A673 (cell line): ENCODE measurements at regions of chr10 and their contacts with region 1.

Region 1: DNA sequence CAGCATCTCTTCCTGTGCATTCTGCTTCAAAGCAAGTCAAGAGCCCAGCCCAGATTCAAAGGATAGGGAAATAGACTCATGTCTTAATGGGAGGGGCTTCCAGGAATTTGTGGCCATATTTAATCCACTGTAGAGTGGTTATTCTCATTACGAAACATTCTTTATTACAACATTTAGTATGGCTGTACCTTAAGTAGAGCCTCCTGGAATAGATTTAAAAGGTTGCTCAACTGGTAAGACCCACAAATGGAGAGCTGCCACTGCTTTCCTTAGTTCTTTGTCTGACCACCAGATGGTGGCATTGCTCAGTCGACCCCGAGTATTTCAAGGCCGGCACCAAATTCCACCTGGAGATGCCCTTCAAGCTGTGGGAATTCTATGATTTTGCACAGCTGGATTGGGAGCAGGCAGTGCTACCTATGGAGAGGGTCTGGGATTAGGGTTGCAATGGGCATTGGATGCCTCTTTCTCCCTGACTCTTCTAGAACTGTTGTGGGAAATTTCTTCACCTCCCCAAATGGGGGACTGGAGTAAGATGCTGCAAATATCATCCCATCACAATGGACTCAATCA is 102.2 kb downstream of the RBM20 start:
- DNase-seq: peak; percentile 71
- H3K4me3 ChIP-seq: no peak overlapping the region
- H3K27ac ChIP-seq: no peak overlapping the region
- H3K4me1 ChIP-seq: no peaks in the 10 kb centered on the region
- H3K27me3 ChIP-seq: no peaks in the 10 kb centered on the region
- CTCF ChIP-seq: peak; percentile 86

Region 2: GRCh38 chr10:110336111-110336721 is 410.1 kb before region 1 on chr10:
- CTCF ChIA-PET with region 1: no interaction called
- POLR2A ChIA-PET with region 1: no interaction called
- intact Hi-C with region 1: no loop called
- DNase-seq: peak; percentile 92
- H3K4me3 ChIP-seq: no peak overlapping the region
- H3K27ac ChIP-seq: peak overlapping the region; percentile 45
- H3K4me1 ChIP-seq: peaks cover 21% of the 10 kb centered on the region
- H3K27me3 ChIP-seq: no peaks in the 10 kb centered on the region
- CTCF ChIP-seq: no peak

Region 3: GRCh38 chr10:110610308-110610774 is 136.0 kb before region 1 on chr10:
- CTCF ChIA-PET with region 1: no interaction called
- POLR2A ChIA-PET with region 1: no interaction called
- intact Hi-C with region 1: loop called (anchors 5 kb)
- DNase-seq: peak; percentile 78
- H3K4me3 ChIP-seq: no peak overlapping the region
- H3K27ac ChIP-seq: no peak overlapping the region
- H3K4me1 ChIP-seq: peaks cover 15% of the 10 kb centered on the region
- H3K27me3 ChIP-seq: no peaks in the 10 kb centered on the region
- CTCF ChIP-seq: peak; percentile 88

Region 4: DNA sequence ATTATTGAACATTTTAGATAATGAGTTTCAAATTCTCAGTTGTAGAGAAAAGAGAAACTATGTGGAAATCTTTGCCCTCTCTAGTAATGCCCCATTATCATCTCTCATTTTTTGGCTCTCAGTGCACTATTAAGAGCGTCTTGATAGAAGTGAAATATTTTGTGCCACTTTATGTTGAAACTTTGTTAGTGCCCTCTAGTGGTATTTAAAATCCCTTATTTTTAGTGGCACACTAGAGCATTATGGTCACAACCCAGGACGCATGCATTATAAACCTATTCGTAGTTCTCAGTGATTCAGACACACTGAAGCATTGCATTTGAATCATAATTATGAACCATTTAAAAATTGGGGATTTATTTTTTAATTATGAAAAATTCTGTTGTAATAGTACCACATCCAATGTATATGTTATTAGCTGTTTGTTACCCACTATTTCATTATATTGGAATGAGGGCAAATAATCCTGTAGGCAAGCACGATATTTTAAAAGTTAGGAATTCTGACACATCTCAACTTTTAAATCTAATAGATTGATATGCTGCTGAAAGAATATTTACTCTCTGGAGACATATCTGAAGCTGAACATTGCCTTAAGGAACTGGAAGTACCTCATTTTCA is 147.3 kb after region 1 on chr10:
- CTCF ChIA-PET with region 1: interaction called, 4 read pairs
- POLR2A ChIA-PET with region 1: no interaction called
- intact Hi-C with region 1: loop called (anchors 1 kb)
- DNase-seq: peak; percentile 76
- H3K4me3 ChIP-seq: no peak overlapping the region
- H3K27ac ChIP-seq: no peak overlapping the region
- H3K4me1 ChIP-seq: peaks cover 4% of the 10 kb centered on the region
- H3K27me3 ChIP-seq: no peaks in the 10 kb centered on the region
- CTCF ChIP-seq: peak; percentile 67

Region 5: DNA sequence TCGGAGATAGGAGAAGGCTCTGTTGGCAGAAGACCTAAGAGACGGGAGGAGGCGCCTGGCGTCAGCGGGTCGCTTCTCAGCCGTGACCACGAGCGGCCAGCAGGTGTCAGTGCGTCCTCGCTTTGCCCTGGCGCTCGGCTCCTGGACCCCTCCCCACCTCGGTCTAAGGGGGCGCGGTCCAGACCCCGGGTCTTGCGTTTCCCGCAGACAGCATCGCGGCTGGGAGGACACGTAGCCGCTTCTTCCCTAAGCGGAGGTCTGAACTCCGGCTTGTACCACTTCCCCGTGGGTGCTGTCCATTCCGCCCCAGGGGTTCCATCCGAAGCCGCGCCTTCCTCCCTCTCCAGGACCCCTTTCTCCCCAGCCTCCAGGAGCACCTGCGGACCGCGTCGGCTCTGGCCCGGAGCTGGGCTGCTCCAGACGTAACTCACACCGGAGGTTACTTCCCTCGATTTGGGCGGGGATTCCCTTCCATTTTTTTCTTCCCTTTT is 329.9 kb after region 1 on chr10:
- CTCF ChIA-PET with region 1: no interaction called
- POLR2A ChIA-PET with region 1: no interaction called
- intact Hi-C with region 1: loop called (anchors 5 kb)
- DNase-seq: peak; percentile 67
- H3K4me3 ChIP-seq: peak overlapping the region; percentile 51
- H3K27ac ChIP-seq: no peak overlapping the region
- H3K4me1 ChIP-seq: peaks cover 18% of the 10 kb centered on the region
- H3K27me3 ChIP-seq: peaks cover 61% of the 10 kb centered on the region
- CTCF ChIP-seq: peak; percentile 85

Region 6: GRCh38 chr10:111158595-111158994 is 412.3 kb after region 1 on chr10:
- CTCF ChIA-PET with region 1: no interaction called
- POLR2A ChIA-PET with region 1: no interaction called
- intact Hi-C with region 1: no loop called
- DNase-seq: no peak
- H3K4me3 ChIP-seq: no peak overlapping the region
- H3K27ac ChIP-seq: no peak overlapping the region
- H3K4me1 ChIP-seq: no peaks in the 10 kb centered on the region
- H3K27me3 ChIP-seq: peaks cover 46% of the 10 kb centered on the region
- CTCF ChIP-seq: no peak

Region 7: DNA sequence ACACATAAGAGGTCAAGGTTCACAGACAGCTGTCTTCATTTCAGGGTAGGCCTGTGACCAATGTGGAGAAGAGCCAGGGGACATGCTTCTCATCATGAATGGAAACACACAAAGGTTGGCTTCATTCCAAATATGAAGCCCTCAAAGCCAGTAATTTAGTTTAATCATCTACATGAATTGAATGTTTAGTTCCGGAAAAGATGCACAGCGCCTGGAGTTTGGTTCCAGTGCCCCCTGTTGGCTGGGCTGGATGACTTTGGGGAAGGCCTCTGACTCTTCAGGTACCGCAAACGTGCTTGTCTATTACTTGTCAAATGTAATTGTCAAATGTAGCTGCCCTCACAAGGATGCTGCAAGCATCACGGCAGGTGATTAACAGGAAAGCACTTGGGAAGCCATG is 461.2 kb after region 1 on chr10:
- CTCF ChIA-PET with region 1: no interaction called
- POLR2A ChIA-PET with region 1: interaction called, 3 read pairs
- intact Hi-C with region 1: loop called (anchors 5 kb)
- DNase-seq: peak; percentile 5
- H3K4me3 ChIP-seq: no peak overlapping the region
- H3K27ac ChIP-seq: no peak overlapping the region
- H3K4me1 ChIP-seq: no peaks in the 10 kb centered on the region
- H3K27me3 ChIP-seq: peaks cover 15% of the 10 kb centered on the region
- CTCF ChIP-seq: peak; percentile 37

Region 8: DNA sequence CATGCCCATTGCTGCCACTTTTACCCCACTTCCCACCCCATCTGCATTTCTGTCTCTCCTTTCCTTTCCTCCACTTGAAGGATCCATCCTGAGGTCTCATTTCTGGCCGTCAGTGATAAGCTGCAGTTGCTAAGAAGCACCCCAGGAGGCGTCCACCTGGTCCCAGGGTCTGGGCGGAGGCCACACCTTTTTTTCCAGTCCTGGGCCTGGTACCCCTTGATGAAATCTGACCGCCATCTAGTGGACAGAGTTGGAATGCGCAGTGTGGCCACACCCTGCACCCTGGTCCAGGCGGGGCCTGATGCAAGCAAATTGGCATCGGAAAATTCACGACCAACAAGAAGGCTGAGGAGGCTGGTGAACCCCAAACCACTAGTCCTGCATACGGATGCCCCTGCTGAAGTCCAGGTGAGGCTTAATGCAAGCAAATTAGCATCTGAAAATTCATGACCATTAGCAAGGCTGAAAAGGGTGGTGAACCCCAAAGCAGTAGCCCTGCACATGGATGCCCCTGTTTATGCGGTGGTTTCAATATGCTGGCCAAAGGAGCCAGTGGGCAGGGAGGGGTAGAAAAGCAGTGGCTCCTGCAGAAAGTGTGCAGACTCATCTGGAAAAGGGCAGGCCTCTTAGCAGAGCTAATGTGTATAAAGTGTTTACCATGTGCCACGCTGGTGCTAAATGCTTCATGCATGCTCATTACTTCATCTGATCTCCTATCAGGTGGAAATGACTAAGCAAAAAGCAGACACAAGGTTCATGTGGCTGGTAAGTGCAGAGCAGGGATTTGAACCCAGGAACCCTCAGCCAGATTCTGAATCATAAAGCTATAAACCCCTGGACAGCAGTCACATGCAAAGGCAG is 1394.0 kb after region 1 on chr10:
- CTCF ChIA-PET with region 1: no interaction called
- POLR2A ChIA-PET with region 1: no interaction called
- intact Hi-C with region 1: loop called (anchors 10 kb)
- DNase-seq: peak; percentile 80
- H3K4me3 ChIP-seq: no peak overlapping the region
- H3K27ac ChIP-seq: no peak overlapping the region
- H3K4me1 ChIP-seq: no peaks in the 10 kb centered on the region
- H3K27me3 ChIP-seq: no peaks in the 10 kb centered on the region
- CTCF ChIP-seq: peak; percentile 93